GM12878 (cell line): ENCODE measurements at regions of chr12 and their contacts with region 1.

Region 1: GRCh38 chr12:92145731-92146496 is at the start of gene BTG1:
- DNase-seq: peak; percentile 100
- ATAC-seq: peak; percentile 72
- H3K4me3 ChIP-seq: peak within 1 kb of the TSS; percentile 89
- H3K27ac ChIP-seq: peak within 1 kb of the TSS; percentile 94
- H3K4me1 ChIP-seq: peaks cover 8% of the 10 kb centered on the region
- H3K27me3 ChIP-seq: no peaks in the 10 kb centered on the region
- CTCF ChIP-seq: no peak
- EP300 ChIP-seq: no peak; a peak in 2 of 4 replicates
- POLR2A ChIP-seq: peak; percentile 97
- RAD21 ChIP-seq: 0 out of 2 replicates have a peak, but pooled peaks have one; percentile 5
- polyA plus RNA-seq, gene BTG1: 23.7 to 61.5 TPM

Region 2: DNA sequence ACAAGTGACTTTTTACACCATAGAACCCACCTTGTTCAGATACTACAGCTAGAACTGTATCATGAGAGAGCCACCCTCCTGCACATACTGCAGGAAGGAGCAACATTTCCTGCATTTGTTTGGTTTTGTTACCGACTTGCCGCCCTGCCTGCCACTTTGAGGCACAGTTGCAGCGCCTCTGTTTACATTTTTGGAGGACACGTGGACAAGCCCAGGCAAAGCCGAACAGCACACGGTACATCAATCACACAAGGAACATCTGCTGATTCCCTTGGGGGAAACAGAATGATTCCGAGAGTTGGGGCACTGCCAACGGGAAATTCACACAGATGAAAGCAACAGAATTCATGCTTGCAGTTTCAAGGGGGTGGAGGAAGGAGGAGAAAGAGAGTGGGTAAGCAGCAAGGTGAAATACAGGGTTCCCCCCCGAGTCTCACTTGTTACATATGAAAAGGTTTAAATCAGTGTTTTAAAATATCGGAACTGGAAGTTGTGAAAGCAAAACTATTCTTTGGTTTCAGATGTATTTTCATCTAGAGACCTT is 111.0 kb before region 1 on chr12:
- CTCF ChIA-PET with region 1: interaction called, 3 read pairs
- POLR2A ChIA-PET with region 1: interaction called, 9 read pairs
- RAD21 ChIA-PET with region 1: interaction called, 26 read pairs
- SMC1A ChIA-PET with region 1: interaction called, 32 read pairs
- in situ Hi-C with region 1: no loop called
- intact Hi-C with region 1: no loop called
- DNase-seq: peak; percentile 99
- ATAC-seq: peak; percentile 84
- H3K4me3 ChIP-seq: peak overlapping the region; percentile 27
- H3K27ac ChIP-seq: peak overlapping the region; percentile 80
- H3K4me1 ChIP-seq: peaks cover 13% of the 10 kb centered on the region
- H3K27me3 ChIP-seq: no peaks in the 10 kb centered on the region
- CTCF ChIP-seq: no peak
- EP300 ChIP-seq: peak; percentile 89 to 90
- POLR2A ChIP-seq: peak; percentile 36; the same call in 1 of the 2 replicates
- RAD21 ChIP-seq: peak; percentile 41

Region 3: DNA sequence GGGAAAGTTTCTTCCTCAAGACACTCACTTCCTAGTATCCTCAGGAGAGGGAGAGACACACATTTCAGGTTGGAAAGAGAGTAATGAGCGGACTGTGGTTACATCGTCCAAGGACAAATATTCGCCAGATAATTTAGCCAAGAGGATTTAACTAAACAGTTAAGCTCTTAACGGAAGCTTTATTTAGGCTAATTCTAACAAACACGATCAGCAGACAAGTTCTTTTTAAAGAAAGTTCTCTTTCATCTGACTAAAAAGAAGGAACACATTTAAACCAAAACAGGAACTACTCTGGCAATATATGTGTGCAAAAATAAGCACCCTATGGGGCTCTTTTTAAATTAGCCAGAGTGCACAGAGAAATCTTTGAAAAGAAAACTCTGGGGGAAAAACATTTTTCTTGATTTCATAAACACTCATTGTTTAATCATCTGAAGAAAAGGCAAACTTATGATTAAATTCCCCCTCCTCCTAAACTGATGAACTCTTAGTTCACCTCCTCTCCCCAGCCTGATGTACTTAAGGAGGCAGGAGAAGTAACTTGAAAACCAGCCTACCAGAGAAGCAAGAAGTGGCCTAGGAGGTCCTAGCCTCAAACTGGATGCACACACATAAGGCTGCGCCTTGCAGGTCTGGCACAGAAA is 13.0 kb after region 1 on chr12:
- CTCF ChIA-PET with region 1: interaction called, 5 read pairs
- POLR2A ChIA-PET with region 1: interaction called, 222 read pairs
- RAD21 ChIA-PET with region 1: interaction called, 29 read pairs
- SMC1A ChIA-PET with region 1: interaction called, 35 read pairs
- in situ Hi-C with region 1: no loop called
- intact Hi-C with region 1: no loop called
- DNase-seq: no peak
- ATAC-seq: peak; percentile 73
- H3K4me3 ChIP-seq: peak overlapping the region; percentile 59
- H3K27ac ChIP-seq: peak overlapping the region; percentile 87
- H3K4me1 ChIP-seq: peaks cover 21% of the 10 kb centered on the region
- H3K27me3 ChIP-seq: no peaks in the 10 kb centered on the region
- CTCF ChIP-seq: no peak
- EP300 ChIP-seq: peak in 1 of 2 experiments; percentile 40; a peak in 1 of 4 replicates
- POLR2A ChIP-seq: no peak
- RAD21 ChIP-seq: no peak

Region 4: DNA sequence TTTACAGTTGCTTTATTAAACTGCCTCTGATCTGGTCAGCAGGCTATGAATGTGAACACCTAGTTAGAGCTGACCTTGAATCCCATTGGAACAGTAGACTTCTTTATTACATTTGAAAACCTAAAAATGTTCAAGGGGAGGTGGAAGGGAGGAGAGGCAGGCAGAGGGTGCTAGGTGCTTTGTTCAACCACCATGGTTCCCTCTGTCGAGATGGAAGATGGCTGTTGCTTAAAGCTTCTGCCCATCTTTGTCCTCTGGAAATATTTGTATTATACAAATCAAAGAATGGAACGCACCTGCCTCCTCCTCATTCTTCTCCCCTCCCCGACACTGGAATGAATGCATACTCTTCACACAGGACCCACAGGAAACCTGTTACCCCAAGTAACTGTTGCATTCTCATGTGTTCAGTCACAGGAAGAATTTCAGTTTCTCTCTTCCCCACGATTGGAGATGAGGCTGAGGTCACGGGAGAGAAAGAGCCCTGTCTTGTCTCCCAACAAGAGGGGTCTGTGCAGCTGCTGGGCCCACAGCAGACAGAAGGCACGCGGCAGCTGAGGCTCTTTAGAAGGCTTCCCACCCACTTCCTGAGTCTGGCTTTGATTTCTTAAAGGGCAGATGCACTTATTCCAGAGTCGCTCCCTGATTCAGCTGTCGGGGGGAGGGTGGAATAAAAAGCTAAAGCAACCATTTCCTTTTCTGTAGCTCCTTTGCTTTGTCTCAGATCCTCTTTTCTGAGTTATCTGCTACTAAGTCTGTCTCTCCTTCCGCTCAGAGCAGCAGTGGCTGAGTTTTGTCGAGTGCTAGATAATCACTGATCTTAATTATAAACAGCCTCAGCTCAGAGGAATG is 217.6 kb after region 1 on chr12:
- CTCF ChIA-PET with region 1: interaction called, 5 read pairs
- POLR2A ChIA-PET with region 1: interaction called, 38 read pairs
- RAD21 ChIA-PET with region 1: interaction called, 71 read pairs
- SMC1A ChIA-PET with region 1: interaction called, 19 read pairs
- in situ Hi-C with region 1: no loop called
- intact Hi-C with region 1: loop called (anchors 1 kb)
- DNase-seq: peak; percentile 96
- ATAC-seq: peak; percentile 82
- H3K4me3 ChIP-seq: peak overlapping the region; percentile 62
- H3K27ac ChIP-seq: peak overlapping the region; percentile 99
- H3K4me1 ChIP-seq: peaks cover 17% of the 10 kb centered on the region; the same call in 1 of the 2 replicates
- H3K27me3 ChIP-seq: no peaks in the 10 kb centered on the region
- CTCF ChIP-seq: no peak
- EP300 ChIP-seq: peak; percentile 60 to 79; a peak in 3 of 4 replicates
- POLR2A ChIP-seq: peak; percentile 83
- RAD21 ChIP-seq: peak; percentile 12; the same call in 1 of the 2 replicates

Region 5: GRCh38 chr12:92466391-92467305 is 320.7 kb after region 1 on chr12:
- CTCF ChIA-PET with region 1: interaction called, 3 read pairs
- POLR2A ChIA-PET with region 1: interaction called, 12 read pairs
- RAD21 ChIA-PET with region 1: interaction called, 16 read pairs
- SMC1A ChIA-PET with region 1: interaction called, 5 read pairs
- in situ Hi-C with region 1: no loop called
- intact Hi-C with region 1: loop called (anchors 2 kb)
- DNase-seq: peak; percentile 90
- ATAC-seq: peak; percentile 39
- H3K4me3 ChIP-seq: peak overlapping the region; percentile 82
- H3K27ac ChIP-seq: peak overlapping the region; percentile 99
- H3K4me1 ChIP-seq: peaks cover 62% of the 10 kb centered on the region
- H3K27me3 ChIP-seq: no peaks in the 10 kb centered on the region
- CTCF ChIP-seq: no peak
- EP300 ChIP-seq: peak; percentile 65 to 70; a peak in 3 of 4 replicates
- POLR2A ChIP-seq: peak; percentile 85
- RAD21 ChIP-seq: peak; percentile 5

Region 6: GRCh38 chr12:92561543-92561899 is 415.6 kb after region 1 on chr12:
- CTCF ChIA-PET with region 1: interaction called, 5 read pairs
- POLR2A ChIA-PET with region 1: interaction called, 39 read pairs
- RAD21 ChIA-PET with region 1: interaction called, 94 read pairs
- SMC1A ChIA-PET with region 1: interaction called, 18 read pairs
- in situ Hi-C with region 1: no loop called
- intact Hi-C with region 1: no loop called
- DNase-seq: no peak
- ATAC-seq: peak; percentile 13
- H3K4me3 ChIP-seq: peak overlapping the region; percentile 50; the same call in 1 of the 2 replicates
- H3K27ac ChIP-seq: peak overlapping the region; percentile 36
- H3K4me1 ChIP-seq: peaks cover 32% of the 10 kb centered on the region
- H3K27me3 ChIP-seq: no peaks in the 10 kb centered on the region
- CTCF ChIP-seq: no peak
- EP300 ChIP-seq: peak in 1 of 2 experiments; percentile 35; a peak in 1 of 4 replicates
- POLR2A ChIP-seq: no peak
- RAD21 ChIP-seq: no peak